Colonic mucosa (tissue), 4 donors: ENCODE measurements at regions of chr18 and their contacts with region 1.

Region 1: DNA sequence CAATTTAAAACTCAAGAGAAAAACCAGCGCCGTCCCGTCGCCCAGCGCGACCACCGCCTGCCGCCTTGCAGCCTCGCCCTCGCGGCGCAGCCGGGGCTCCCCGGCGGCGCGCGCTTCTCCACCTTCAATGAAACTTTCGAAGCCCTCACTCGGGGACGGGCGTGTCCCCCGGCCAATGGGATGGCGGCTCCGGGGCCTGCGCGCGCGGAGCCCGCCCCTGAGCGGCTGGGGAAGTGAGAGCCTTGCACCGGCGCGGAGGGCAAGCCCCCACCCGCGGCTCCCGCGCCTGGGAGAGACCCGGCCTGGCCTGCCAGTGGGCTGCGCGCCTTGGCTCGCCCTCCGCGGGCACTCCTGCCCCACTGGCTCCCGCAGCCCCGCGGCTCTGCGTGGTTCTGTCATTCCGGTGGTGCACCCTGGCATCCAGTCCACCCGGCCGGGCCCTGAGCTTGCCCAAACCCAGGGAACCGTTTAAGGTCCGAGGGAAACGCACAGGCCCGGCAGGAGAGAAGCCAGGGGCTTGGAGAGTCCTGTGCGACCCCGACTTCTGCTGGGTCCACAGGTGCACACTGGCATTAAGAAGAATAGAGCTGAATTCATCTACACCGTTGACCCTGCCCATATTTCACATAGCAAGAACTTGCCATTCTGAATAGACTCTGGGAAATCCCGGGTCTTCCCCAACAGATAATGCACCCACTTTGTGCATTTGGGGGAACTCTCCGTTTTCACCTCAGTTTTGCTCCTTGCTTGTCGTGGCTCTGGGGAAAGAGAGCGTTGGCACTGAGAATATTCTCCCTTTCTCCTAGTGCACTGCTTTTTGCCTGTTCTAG is at the start of gene PIEZO2:
- DNase-seq: peak; percentile 69
- H3K4me3 ChIP-seq: peak within 1 kb of the TSS; percentile 21
- H3K27ac ChIP-seq: no peak within 1 kb of the TSS
- H3K4me1 ChIP-seq: no peaks in the 10 kb centered on the region
- H3K27me3 ChIP-seq: peaks cover 30% of the 10 kb centered on the region
- CTCF ChIP-seq: no peak
- total RNA-seq, gene PIEZO2: 0.79 to 4.0 TPM

Region 2: DNA sequence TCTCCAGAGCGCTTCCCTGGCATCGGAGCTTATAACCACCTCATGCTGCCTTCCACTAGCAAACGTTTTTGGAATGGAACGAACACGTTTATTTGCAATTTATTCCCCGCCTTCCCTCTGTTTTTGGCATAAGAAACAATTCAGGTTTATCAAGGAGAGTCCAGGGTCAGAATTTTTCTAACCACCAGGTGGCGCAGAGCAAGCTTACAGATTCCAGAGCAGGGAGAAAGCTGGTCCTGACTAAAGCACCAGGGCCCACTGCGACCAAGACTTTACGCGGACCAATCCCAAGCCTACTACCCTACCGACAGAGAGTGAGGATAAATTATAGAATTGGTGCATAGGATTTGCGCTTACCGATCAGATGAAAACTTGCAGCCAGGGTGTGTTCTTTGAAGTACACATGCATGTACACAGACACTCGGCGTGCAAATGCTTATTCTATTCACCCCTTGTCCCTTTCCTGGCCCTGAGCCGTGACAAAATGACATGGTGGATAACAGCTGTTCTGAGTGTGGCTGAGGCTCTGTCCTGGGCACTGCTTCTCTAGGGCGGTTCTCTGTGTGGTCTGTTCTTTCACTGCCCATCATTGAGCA is 589.1 kb before region 1 on chr18:
- intact Hi-C with region 1: loop called (anchors 5 kb)
- DNase-seq: peak; percentile 80
- H3K4me3 ChIP-seq: no peak overlapping the region
- H3K27ac ChIP-seq: no peak overlapping the region
- H3K4me1 ChIP-seq: no peaks in the 10 kb centered on the region
- H3K27me3 ChIP-seq: no peaks in the 10 kb centered on the region
- CTCF ChIP-seq: peak; percentile 72

Region 3: GRCh38 chr18:10787293-10787901 is 362.3 kb before region 1 on chr18:
- intact Hi-C with region 1: loop called (anchors 10 kb)
- DNase-seq: peak; percentile 87
- H3K4me3 ChIP-seq: no peak overlapping the region
- H3K27ac ChIP-seq: no peak overlapping the region
- H3K4me1 ChIP-seq: no peaks in the 10 kb centered on the region
- H3K27me3 ChIP-seq: no peaks in the 10 kb centered on the region
- CTCF ChIP-seq: peak; percentile 82

Region 4: DNA sequence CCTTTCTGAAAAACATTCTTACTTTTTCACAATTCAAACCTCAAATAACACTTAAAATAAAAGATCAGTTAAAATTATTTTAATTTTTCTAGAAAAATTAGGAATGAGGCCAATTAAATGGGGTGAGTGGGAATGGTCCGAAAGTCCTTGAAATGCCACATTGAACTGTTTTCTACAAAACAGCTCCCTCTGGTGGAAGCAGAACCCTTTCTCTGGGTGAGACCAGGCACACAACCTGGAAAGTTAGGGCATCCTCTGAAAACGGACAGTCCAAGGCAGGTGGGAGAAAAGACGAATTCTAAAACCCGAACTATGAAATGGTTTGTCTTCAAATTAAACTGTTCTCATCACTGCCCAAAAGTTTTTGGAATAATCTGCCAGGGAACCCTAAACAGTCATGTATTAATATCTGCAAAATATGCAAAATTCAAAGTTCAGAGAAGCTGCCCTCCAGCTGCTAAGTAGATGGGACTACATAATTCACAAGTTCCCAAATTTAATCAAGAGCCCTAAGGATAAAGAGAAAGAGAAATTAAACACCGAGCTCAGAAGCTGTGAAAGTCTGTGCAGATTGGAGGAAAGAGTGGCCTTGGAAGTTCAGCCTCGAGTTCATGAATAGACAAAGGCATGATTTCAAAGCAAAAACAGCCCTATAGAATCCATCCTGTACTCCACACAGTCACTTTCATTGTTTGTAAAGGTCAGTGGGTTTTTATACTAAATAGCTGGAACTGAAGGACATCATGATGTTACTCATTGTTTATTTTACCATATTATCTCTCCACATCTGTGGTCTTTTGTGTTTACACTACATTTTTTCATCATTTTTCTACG is 108.6 kb before region 1 on chr18:
- intact Hi-C with region 1: loop called (anchors 10 kb)
- DNase-seq: peak; percentile 84
- H3K4me3 ChIP-seq: no peak overlapping the region
- H3K27ac ChIP-seq: no peak overlapping the region
- H3K4me1 ChIP-seq: no peaks in the 10 kb centered on the region
- H3K27me3 ChIP-seq: no peaks in the 10 kb centered on the region
- CTCF ChIP-seq: peak; percentile 71

Region 5: GRCh38 chr18:11310476-11311086 is 160.9 kb after region 1 on chr18:
- intact Hi-C with region 1: no loop called
- DNase-seq: peak; percentile 31
- H3K4me3 ChIP-seq: no peak overlapping the region
- H3K27ac ChIP-seq: no peak overlapping the region
- H3K4me1 ChIP-seq: no peaks in the 10 kb centered on the region
- H3K27me3 ChIP-seq: no peaks in the 10 kb centered on the region
- CTCF ChIP-seq: no peak